Panc1 (cell line): ENCODE measurements at regions of chr19 and their contacts with region 1.

Region 1: DNA sequence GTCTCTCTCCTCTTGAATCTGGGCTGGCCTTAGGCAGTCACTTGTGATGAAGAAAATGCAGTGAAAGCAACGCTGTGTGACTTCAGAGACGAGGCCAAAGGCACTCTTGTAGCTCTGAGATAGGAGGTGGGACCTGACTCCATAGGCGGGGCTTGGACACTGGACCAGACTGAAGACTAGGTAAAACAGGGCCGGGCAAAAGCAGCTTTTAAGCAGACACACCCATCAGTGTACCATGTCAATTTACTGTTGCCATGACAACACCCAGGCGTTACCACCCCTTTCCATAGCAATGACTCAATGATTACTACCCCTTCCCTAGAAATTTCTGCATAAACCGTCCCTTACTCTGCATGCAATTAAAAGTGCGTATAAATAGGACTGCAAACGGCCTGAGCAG is 6.6 kb upstream of the EID2 start:
- DNase-seq: no peak
- ATAC-seq: no peak; the same call in 1 of the 2 replicates
- H3K4me3 ChIP-seq: no peak overlapping the region
- H3K27ac ChIP-seq: no peak overlapping the region
- H3K4me1 ChIP-seq: peaks cover 6% of the 10 kb centered on the region
- H3K27me3 ChIP-seq: peaks cover 20% of the 10 kb centered on the region
- CTCF ChIP-seq: no peak

Region 2: DNA sequence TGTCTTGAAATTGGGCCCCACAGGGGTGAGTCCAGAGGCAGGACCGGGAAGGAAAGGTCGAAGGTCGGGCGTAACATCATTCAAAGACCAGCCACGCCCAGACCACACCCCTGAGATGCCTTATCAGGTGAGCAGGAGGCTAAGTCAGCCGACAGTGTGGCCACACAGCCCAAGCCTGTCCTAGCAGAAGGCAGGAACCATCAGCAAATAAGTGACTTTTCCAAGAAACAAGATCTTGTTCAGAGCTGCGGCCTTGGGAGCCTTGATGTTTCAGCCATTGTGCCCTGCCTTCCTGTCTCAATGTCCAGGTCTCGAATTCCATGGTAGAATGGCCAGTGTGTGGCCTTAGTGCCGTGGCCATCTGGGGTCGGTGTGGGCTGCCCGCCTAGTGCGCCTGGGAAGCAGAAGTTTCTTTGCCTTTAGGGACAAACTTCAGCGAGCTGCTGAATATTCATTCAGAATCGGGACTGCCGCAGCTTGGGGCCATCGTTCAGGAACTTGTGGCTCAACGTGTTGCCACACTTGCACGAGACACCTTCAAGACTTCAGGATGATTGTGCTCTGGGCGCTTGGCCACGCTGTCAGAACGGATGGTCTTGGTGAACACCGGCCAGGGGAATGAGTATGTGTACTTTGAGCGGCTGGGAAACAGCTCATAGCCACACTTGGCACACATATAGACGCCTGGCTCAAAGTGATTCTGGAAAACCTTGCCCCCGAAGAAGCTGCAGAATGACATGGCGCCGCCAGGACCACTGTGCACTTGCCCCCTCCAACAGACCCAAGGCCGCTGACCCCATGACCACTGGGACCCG is 291.9 kb before region 1 on chr19:
- CTCF ChIA-PET with region 1: no interaction called
- POLR2A ChIA-PET with region 1: no interaction called
- in situ Hi-C with region 1: no loop called
- intact Hi-C with region 1: no loop called
- DNase-seq: no peak
- ATAC-seq: no peak
- H3K4me3 ChIP-seq: no peak overlapping the region
- H3K27ac ChIP-seq: no peak overlapping the region
- H3K4me1 ChIP-seq: no peaks in the 10 kb centered on the region
- H3K27me3 ChIP-seq: peaks cover 4% of the 10 kb centered on the region; the same call in 1 of the 2 replicates
- CTCF ChIP-seq: no peak

Region 3: DNA sequence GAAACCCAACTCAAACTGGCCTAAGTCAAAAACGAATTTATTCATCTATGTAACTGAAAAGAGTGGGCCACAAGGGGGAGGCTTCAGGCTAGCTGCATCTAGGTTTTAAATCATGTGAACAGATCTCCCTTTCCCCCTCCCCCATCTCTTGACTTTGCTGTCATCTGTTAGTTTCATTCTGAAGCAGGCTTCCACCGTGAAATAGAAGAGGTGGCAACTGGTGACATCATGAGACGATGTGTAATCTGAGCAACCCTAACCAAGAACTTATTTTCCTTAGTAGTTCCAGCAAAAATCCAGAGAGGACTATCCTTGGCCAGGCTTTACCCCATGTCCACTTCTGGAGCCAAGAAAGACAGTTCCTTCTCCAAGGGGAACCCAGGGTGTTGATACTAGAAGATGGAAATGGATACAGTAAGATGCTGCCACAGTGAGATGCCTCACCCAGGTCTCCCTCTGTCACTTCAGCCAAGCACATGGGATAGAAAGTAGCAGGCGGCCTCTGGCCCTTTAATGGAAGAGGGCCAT is 195.0 kb before region 1 on chr19:
- CTCF ChIA-PET with region 1: no interaction called
- POLR2A ChIA-PET with region 1: no interaction called
- in situ Hi-C with region 1: loop called (anchors 5 kb)
- intact Hi-C with region 1: no loop called
- DNase-seq: no peak
- ATAC-seq: peak; percentile 6
- H3K4me3 ChIP-seq: no peak overlapping the region
- H3K27ac ChIP-seq: no peak overlapping the region
- H3K4me1 ChIP-seq: no peaks in the 10 kb centered on the region
- H3K27me3 ChIP-seq: no peaks in the 10 kb centered on the region
- CTCF ChIP-seq: no peak

Region 4: DNA sequence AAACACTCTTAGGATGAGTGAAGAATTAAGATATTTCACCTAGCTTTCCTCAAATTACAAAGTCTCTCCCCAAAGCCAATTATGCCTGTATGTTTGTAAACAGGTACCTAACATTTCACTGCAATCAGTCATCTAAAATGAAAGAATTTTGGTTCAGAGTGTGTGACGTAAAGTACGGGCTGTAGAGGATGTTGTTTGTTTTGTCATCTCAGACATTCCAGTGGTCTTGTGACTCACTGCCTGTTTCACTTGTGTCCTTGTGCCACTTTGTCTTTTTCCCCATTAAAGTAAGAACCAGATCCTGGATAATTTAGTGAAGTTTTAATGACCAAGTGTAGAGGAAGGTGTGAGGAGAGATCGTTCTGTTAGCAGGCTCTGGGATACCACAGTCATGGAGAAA is 22.0 kb after region 1 on chr19:
- CTCF ChIA-PET with region 1: interaction called, 14 read pairs
- POLR2A ChIA-PET with region 1: no interaction called
- in situ Hi-C with region 1: no loop called
- intact Hi-C with region 1: no loop called
- DNase-seq: peak; percentile 83
- ATAC-seq: peak; percentile 59
- H3K4me3 ChIP-seq: no peak overlapping the region
- H3K27ac ChIP-seq: no peak overlapping the region
- H3K4me1 ChIP-seq: 0 out of 2 replicates have a peak, but pooled peaks cover 5% of the 10 kb centered on the region
- H3K27me3 ChIP-seq: peaks cover 85% of the 10 kb centered on the region
- CTCF ChIP-seq: no peak

Region 5: DNA sequence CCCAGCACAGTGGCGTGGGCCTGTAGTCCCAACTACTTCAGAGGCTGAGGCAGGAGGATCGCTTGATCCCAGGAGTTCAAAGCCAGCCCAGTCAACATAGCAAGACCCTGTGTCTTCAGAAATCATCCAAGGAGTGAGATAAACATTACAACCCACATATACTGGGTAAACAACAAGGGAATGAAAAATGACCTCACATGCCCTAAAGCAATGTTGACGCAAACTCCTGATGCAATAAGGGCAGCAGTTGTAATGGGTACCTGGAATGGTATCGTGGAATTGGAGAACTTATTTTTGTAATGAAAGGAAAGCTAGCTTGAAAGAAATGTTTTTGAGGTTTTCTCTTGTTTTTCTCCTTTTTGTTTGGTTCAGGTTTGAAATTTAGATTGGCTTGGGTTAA is 84.6 kb after region 1 on chr19:
- CTCF ChIA-PET with region 1: interaction called, 102 read pairs
- POLR2A ChIA-PET with region 1: interaction called, 4 read pairs
- in situ Hi-C with region 1: no loop called
- intact Hi-C with region 1: loop called (anchors 1 kb)
- DNase-seq: peak; percentile 56
- ATAC-seq: peak; percentile 47
- H3K4me3 ChIP-seq: no peak overlapping the region
- H3K27ac ChIP-seq: no peak overlapping the region
- H3K4me1 ChIP-seq: no peaks in the 10 kb centered on the region
- H3K27me3 ChIP-seq: peaks cover 60% of the 10 kb centered on the region
- CTCF ChIP-seq: no peak; the same call in 1 of the 2 replicates

Region 6: GRCh38 chr19:39671738-39672363 is 125.3 kb after region 1 on chr19:
- CTCF ChIA-PET with region 1: interaction called, 508 read pairs
- POLR2A ChIA-PET with region 1: interaction called, 8 read pairs
- in situ Hi-C with region 1: loop called (anchors 5 kb)
- intact Hi-C with region 1: loop called (anchors 1 kb)
- DNase-seq: peak; percentile 100
- ATAC-seq: peak; percentile 95
- H3K4me3 ChIP-seq: no peak overlapping the region
- H3K27ac ChIP-seq: no peak overlapping the region
- H3K4me1 ChIP-seq: peaks cover 11% of the 10 kb centered on the region
- H3K27me3 ChIP-seq: peaks cover 57% of the 10 kb centered on the region
- CTCF ChIP-seq: no peak

Region 7: GRCh38 chr19:39746836-39747529 is 200.4 kb after region 1 on chr19:
- CTCF ChIA-PET with region 1: interaction called, 10 read pairs
- POLR2A ChIA-PET with region 1: no interaction called
- in situ Hi-C with region 1: no loop called
- intact Hi-C with region 1: no loop called
- DNase-seq: no peak
- ATAC-seq: peak; percentile 83
- H3K4me3 ChIP-seq: no peak overlapping the region
- H3K27ac ChIP-seq: no peak overlapping the region
- H3K4me1 ChIP-seq: no peaks in the 10 kb centered on the region
- H3K27me3 ChIP-seq: peaks cover 92% of the 10 kb centered on the region
- CTCF ChIP-seq: no peak

Region 8: DNA sequence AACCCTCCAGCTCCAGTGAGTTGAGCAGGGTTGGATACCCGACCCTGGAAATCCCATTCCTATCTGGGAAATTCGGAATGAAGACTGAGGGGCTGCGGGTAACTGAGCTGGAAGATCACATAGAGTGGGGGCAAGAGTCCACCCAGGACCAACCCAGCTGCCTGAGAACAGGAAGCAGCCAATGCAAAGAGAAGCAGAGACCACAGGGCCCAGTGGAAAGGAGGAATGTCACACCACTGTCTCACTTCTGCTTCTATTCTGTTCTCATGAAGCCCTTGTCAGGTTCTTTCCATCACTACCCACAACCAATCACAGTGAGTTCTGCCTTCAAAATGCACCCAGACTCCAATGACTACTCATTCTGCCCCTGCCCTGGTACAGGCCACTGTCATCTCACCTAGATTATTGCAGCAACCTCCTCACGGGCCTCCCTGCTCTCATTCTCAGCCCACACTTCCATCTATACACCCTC is 272.1 kb after region 1 on chr19:
- CTCF ChIA-PET with region 1: interaction called, 11 read pairs
- POLR2A ChIA-PET with region 1: no interaction called
- in situ Hi-C with region 1: no loop called
- intact Hi-C with region 1: no loop called
- DNase-seq: no peak
- ATAC-seq: 0 out of 2 replicates have a peak, but pooled peaks have one; percentile 0
- H3K4me3 ChIP-seq: no peak overlapping the region
- H3K27ac ChIP-seq: no peak overlapping the region
- H3K4me1 ChIP-seq: peaks cover 4% of the 10 kb centered on the region
- H3K27me3 ChIP-seq: no peaks in the 10 kb centered on the region
- CTCF ChIP-seq: no peak